HEK293 (cell line): ENCODE measurements at regions of chrX and their contacts with region 1.

Region 1: GRCh38 chrX:15349046-15349445 is 13.7 kb upstream of the PIGA start:
- H3K4me3 ChIP-seq: no peak overlapping the region
- H3K27ac ChIP-seq: no peak overlapping the region
- H3K4me1 ChIP-seq: no peaks in the 10 kb centered on the region
- CTCF ChIP-seq: no peak; the same call in 1 of the 2 replicates

Region 2: GRCh38 chrX:15299941-15300851 is 48.9 kb before region 1 on chrX:
- CTCF ChIA-PET with region 1: interaction called, 19 read pairs
- POLR2A ChIA-PET with region 1: no interaction called
- H3K4me3 ChIP-seq: no peak overlapping the region
- H3K27ac ChIP-seq: no peak overlapping the region
- H3K4me1 ChIP-seq: no peaks in the 10 kb centered on the region
- CTCF ChIP-seq: no peak

Region 3: GRCh38 chrX:15335135-15336022 is 13.7 kb before region 1 on chrX and contains the start of gene PIGA:
- CTCF ChIA-PET with region 1: interaction called, 10 read pairs
- POLR2A ChIA-PET with region 1: no interaction called
- H3K4me3 ChIP-seq: peak within 1 kb of the TSS; percentile 64
- H3K27ac ChIP-seq: peak within 1 kb of the TSS; percentile 63; the same call in 1 of the 2 replicates
- H3K4me1 ChIP-seq: no peaks in the 10 kb centered on the region
- CTCF ChIP-seq: 0 out of 2 replicates have a peak, but pooled peaks have one; percentile 31

Region 4: DNA sequence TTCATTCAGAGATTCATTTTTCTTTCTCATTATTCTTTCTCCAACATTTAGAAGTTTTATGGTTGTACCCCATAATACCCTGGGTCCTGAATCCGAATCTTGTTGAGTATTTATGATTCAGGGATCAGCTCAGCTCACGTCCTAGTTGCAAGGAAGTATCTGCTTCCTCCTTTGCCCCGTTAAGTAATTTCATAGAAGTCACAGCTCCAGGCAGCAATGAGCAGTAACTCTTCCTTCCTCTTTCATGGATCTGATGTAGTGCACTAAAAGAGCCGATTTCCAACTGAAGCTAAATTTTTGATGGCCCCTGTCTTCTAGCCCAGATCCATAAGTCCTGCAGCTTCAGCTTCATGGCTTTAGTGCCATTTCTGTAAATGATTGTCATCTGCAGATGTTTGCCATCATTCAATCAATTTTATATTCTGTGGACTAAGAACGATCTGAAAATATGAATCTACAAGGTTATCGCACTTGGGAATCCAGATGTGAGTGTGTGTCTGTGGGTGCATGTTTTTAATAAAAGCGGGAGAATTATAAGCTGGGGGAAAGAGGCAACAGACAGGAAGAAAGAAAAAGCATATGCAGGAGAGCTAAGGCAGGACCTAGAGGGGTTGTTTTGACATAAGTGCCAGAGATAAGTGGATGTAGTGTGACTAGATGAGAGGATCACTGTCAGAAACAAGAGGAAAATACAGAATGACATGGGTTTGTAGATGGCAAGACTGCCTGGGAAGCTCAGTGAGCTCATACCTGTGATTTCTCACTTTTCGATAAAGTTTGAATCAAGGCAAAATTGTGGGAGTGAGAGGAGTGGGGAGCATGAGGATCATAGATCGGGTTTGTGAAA is 17.7 kb after region 1 on chrX:
- CTCF ChIA-PET with region 1: interaction called, 33 read pairs
- POLR2A ChIA-PET with region 1: no interaction called
- H3K4me3 ChIP-seq: no peak overlapping the region
- H3K27ac ChIP-seq: no peak overlapping the region
- H3K4me1 ChIP-seq: no peaks in the 10 kb centered on the region
- CTCF ChIP-seq: no peak

Region 5: DNA sequence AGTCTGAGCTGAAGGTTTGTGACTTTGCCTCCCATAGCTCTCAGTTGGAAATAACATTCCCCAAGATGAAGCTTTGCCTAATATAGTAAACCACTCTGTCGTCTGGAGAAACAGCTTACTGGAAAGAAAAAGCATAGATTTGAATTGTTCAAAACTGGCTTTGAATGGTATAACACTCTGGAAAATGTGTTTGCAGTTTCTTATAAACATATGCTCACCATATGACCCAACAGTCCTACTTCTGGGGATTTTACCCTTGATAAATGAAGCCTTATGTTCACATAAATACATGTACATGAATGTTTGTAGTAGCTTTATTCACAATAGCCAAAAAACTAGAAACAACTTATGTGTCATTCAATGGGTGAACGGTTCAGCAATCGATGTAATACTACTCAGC is 24.9 kb after region 1 on chrX:
- CTCF ChIA-PET with region 1: interaction called, 15 read pairs
- POLR2A ChIA-PET with region 1: no interaction called
- H3K4me3 ChIP-seq: no peak overlapping the region
- H3K27ac ChIP-seq: no peak overlapping the region
- H3K4me1 ChIP-seq: no peaks in the 10 kb centered on the region
- CTCF ChIP-seq: no peak

Region 6: DNA sequence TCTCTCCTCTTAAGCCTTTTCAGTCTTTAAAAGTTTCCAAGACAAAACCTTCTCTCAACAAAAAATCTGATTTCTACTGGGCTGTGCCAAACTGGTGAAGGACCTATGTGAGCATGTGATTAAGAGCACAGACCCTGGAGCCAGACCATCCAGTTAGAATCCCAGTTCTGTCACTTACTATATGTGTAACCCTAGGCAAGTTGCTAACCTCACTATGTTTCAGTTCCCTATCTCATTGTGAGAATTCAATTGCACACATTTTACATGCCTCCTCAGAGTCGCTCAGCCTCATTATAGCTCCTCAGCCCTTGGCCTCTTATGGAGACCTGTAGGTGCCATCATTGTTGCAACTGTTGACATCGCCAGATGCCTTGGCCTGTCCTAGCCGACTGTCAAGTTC is 89.3 kb after region 1 on chrX:
- CTCF ChIA-PET with region 1: no interaction called
- POLR2A ChIA-PET with region 1: no interaction called
- H3K4me3 ChIP-seq: no peak overlapping the region
- H3K27ac ChIP-seq: no peak overlapping the region
- H3K4me1 ChIP-seq: no peaks in the 10 kb centered on the region
- CTCF ChIP-seq: no peak

Region 7: GRCh38 chrX:15564981-15565579 is 216.0 kb after region 1 on chrX:
- CTCF ChIA-PET with region 1: interaction called, 24 read pairs
- POLR2A ChIA-PET with region 1: no interaction called
- H3K4me3 ChIP-seq: no peak overlapping the region
- H3K27ac ChIP-seq: no peak overlapping the region
- H3K4me1 ChIP-seq: no peaks in the 10 kb centered on the region
- CTCF ChIP-seq: peak; percentile 31; the same call in 1 of the 2 replicates

Region 8: GRCh38 chrX:15619061-15619777 is 270.2 kb after region 1 on chrX:
- CTCF ChIA-PET with region 1: no interaction called
- POLR2A ChIA-PET with region 1: no interaction called
- H3K4me3 ChIP-seq: no peak overlapping the region
- H3K27ac ChIP-seq: no peak overlapping the region
- H3K4me1 ChIP-seq: 0 out of 2 replicates have a peak, but pooled peaks cover 2% of the 10 kb centered on the region
- CTCF ChIP-seq: no peak